ENCODE measurements at regions of chr11 and their contacts with region 1.

Region 1: DNA sequence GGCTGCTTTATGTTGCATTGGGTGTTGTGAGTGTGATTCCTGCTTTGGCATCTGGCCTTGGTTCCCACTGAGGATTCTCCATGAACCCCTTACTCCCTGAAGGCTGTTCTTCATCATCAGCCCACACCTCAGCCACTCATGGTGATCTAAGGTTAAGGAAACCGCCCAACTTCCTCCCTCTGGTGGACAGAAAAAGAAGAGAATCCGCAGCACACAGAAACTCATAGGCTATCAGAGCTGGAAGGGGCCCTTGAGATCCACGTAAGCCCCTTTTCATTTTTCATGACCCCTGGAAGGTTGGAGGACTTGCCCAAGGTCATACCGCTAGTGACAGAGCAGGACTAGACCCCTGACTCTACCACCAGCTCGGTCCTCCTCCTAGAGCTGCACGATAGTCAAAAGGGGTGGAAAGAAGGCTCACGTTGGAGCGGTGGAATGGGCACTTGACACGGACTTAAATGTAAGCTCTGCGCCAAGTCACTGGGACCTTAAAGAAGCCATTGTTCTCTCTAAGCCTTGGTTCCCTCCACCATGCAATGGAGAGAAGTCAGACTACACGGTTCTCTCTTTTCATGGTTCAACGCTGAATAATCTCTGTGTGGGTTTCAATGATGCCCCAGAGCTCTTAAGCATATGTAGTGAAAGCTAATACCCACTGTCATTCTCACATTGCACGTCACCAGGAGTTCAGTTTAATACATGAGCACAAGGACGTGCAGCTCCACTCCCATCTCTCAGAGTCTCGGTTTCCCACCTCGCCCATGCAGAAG is 83.6 kb upstream of the CRTAM start:
- DNase-seq: peak; percentile 69
- ATAC-seq: peak; percentile 49
- H3K4me3 Mint-ChIP-seq: no peak overlapping the region
- H3K27ac Mint-ChIP-seq: peak overlapping the region; percentile 74
- H3K4me1 Mint-ChIP-seq: peaks cover 64% of the 10 kb centered on the region
- H3K27me3 Mint-ChIP-seq: no peaks in the 10 kb centered on the region

Region 2: DNA sequence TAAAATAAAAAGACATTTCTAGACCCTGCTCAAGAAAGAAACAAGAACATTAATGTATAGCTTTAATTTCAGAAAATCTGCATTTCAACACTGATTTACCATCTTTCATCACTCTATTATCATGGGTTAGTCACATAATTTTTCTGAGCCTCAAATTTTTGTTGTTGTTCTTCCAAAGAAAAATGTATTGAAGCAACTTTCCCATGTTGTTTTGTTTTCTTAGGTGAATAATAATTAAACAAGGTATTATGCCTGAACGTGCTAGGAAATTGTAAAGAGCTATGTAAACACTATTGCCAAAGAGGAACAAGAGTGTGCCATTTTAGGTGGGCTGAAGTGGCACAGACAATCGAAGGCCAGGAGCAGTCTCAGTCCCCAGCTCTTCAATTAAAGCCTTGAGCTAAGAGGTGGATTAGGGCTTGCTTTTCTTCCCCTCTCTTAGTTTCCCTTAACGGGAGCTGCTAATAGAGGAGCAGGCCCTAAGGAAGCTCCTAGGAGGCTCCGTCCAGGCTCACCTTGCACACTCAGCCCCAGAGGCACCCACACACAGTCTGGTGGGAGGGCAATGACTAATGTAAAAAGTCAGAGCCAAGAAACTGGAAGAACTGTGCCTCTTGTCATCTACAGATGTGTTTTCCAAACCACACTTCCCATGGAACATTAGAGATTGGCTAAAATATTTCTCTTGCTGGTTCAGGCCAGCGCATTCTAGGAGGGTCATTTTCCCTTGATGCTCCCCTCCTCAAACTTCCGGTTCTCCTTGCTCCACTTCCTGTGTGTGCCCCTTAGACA is 108.0 kb before region 1 on chr11:
- CTCF ChIA-PET with region 1: interaction called, 288 read pairs
- DNase-seq: no peak
- ATAC-seq: no peak
- H3K4me3 Mint-ChIP-seq: no peak overlapping the region
- H3K27ac Mint-ChIP-seq: no peak overlapping the region
- H3K4me1 Mint-ChIP-seq: peaks cover 10% of the 10 kb centered on the region
- H3K27me3 Mint-ChIP-seq: peaks cover 15% of the 10 kb centered on the region

Region 3: GRCh38 chr11:122690801-122691548 is 63.8 kb before region 1 on chr11:
- CTCF ChIA-PET with region 1: interaction called, 58 read pairs
- DNase-seq: no peak
- ATAC-seq: peak; percentile 52
- H3K4me3 Mint-ChIP-seq: peak overlapping the region; percentile 54
- H3K27ac Mint-ChIP-seq: peak overlapping the region; percentile 85
- H3K4me1 Mint-ChIP-seq: peaks cover 64% of the 10 kb centered on the region
- H3K27me3 Mint-ChIP-seq: no peaks in the 10 kb centered on the region

Region 4: GRCh38 chr11:122727101-122727929 is 27.4 kb before region 1 on chr11:
- CTCF ChIA-PET with region 1: interaction called, 50 read pairs
- DNase-seq: peak; percentile 76
- ATAC-seq: peak; percentile 77
- H3K4me3 Mint-ChIP-seq: peak overlapping the region; percentile 65
- H3K27ac Mint-ChIP-seq: peak overlapping the region; percentile 96
- H3K4me1 Mint-ChIP-seq: peaks cover 82% of the 10 kb centered on the region
- H3K27me3 Mint-ChIP-seq: no peaks in the 10 kb centered on the region

Region 5: GRCh38 chr11:122781378-122782195 is 26.8 kb after region 1 on chr11:
- CTCF ChIA-PET with region 1: interaction called, 91 read pairs
- DNase-seq: peak; percentile 82
- ATAC-seq: peak; percentile 87
- H3K4me3 Mint-ChIP-seq: no peak overlapping the region
- H3K27ac Mint-ChIP-seq: no peak overlapping the region
- H3K4me1 Mint-ChIP-seq: peaks cover 20% of the 10 kb centered on the region
- H3K27me3 Mint-ChIP-seq: no peaks in the 10 kb centered on the region

Region 6: DNA sequence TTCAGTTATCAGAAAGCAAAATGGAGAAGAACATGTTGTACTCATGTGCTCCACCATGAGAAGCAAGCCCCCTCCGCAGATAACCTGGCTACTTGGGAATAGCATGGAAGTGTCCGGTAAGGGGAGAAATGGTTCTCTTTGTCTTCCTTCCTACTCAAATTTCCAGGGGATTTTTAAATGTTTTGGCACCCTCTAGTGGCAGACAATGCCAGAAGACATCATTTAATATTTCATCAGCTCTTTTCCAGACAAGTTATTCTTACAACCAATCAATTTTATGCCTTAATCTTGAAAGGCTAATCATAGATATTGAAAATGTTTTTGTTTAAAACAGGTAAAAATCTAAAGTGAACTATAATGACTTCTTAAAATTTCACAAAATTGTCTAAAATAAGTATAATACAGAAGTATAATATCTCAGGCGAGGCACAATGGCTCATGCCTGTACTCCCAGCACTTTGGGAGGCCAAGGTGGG is 99.3 kb after region 1 on chr11:
- CTCF ChIA-PET with region 1: interaction called, 54 read pairs
- DNase-seq: peak; percentile 63
- ATAC-seq: no peak
- H3K4me3 Mint-ChIP-seq: no peak overlapping the region
- H3K27ac Mint-ChIP-seq: peak overlapping the region; percentile 17
- H3K4me1 Mint-ChIP-seq: peaks cover 58% of the 10 kb centered on the region
- H3K27me3 Mint-ChIP-seq: peaks cover 5% of the 10 kb centered on the region

Region 7: GRCh38 chr11:122910775-122911174 is 156.0 kb after region 1 on chr11:
- CTCF ChIA-PET with region 1: no interaction called
- DNase-seq: no peak
- ATAC-seq: no peak
- H3K4me3 Mint-ChIP-seq: no peak overlapping the region
- H3K27ac Mint-ChIP-seq: no peak overlapping the region
- H3K4me1 Mint-ChIP-seq: no peaks in the 10 kb centered on the region
- H3K27me3 Mint-ChIP-seq: no peaks in the 10 kb centered on the region